ENCODE measurements at regions of chr20 and their contacts with region 1.

Region 1: DNA sequence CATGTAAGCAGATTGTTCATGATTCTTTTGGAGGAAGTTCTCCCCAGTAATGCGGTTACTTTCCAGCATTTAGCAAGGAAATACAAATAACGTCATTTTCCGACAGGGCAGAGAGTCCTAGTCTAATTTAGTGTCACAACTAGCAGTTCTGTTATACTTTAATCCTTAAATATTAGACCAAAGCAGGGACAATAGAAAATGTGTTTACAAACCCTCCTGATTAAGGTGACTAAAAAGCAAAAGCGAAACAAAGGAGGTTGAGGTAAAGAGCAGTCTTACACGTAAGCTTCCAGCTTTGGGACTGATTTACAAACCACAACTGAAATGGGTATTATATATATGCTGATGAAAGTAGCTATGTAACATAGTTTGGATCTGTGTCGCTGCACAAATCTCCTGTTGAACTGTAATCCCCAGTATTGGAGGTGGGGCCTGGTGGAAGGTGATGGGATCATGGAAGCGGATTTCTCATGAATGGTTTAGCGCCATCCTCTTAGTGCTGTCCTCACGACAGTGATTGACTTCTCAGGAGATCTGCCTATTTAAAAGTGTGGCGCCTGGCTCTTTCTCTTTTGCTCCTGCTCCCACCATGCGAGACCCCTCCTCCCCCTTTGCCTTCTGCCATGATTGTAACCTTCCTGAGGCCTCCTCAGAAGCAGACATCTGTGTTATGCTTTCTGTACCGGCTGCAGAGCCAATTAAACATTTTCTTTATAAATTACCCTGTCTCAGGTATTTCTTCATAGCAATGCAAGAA is 81.9 kb downstream of the PLCB1 start:
- DNase-seq: no peak
- H3K4me3 ChIP-seq: no peak overlapping the region
- H3K27ac ChIP-seq: no peak overlapping the region
- H3K4me1 ChIP-seq: no peaks in the 10 kb centered on the region
- H3K27me3 ChIP-seq: peaks cover 4% of the 10 kb centered on the region
- CTCF ChIP-seq: no peak

Region 2: GRCh38 chr20:8260837-8261251 is 46.8 kb after region 1 on chr20:
- CTCF ChIA-PET with region 1: no interaction called
- dilution Hi-C with region 1: loop called (anchors 5 kb)
- in situ Hi-C with region 1: no loop called
- intact Hi-C with region 1: no loop called
- DNase-seq: no peak
- H3K4me3 ChIP-seq: no peak overlapping the region
- H3K27ac ChIP-seq: no peak overlapping the region
- H3K4me1 ChIP-seq: peaks cover 17% of the 10 kb centered on the region
- H3K27me3 ChIP-seq: no peaks in the 10 kb centered on the region
- CTCF ChIP-seq: no peak

Measured in mammary epithelial cell (primary cell).